ENCODE measurements at regions of chr6 and their contacts with region 1.

Region 1: GRCh38 chr6:90179190-90180169 is 117.2 kb downstream of the BACH2 start:
- DNase-seq: peak in 4 of 5 donors; percentile 27 to 36 (median 33)
- H3K4me3 ChIP-seq: no peak overlapping the region
- H3K4me3 Mint-ChIP-seq: no peak overlapping the region
- H3K27ac ChIP-seq: no peak overlapping the region
- H3K27ac Mint-ChIP-seq: peak overlapping the region in 3 of 7 donors; percentile 35 to 72 (median 62)
- H3K4me1 ChIP-seq: peaks cover 46% of the 10 kb centered on the region
- H3K4me1 Mint-ChIP-seq: peaks cover 28 to 75% (median 51%) of the 10 kb centered on the region in 4 donors
- H3K27me3 ChIP-seq: no peaks in the 10 kb centered on the region
- H3K27me3 Mint-ChIP-seq: no peaks in the 10 kb centered on the region

Region 2: GRCh38 chr6:89829591-89830385 is 349.7 kb before region 1 on chr6 and contains the start of gene CASP8AP2:
- CTCF ChIA-PET with region 1: no interaction called
- POLR2A ChIA-PET with region 1: no interaction called
- intact Hi-C with region 1: no loop called
- DNase-seq: peak; percentile 93 to 98 (median 98)
- H3K4me3 ChIP-seq: peak within 1 kb of the TSS; percentile 85 to 86
- H3K4me3 Mint-ChIP-seq: peak within 1 kb of the TSS; percentile 98 to 100 (median 99)
- H3K27ac ChIP-seq: peak within 1 kb of the TSS; percentile 74
- H3K27ac Mint-ChIP-seq: peak within 1 kb of the TSS; percentile 79 to 99 (median 97)
- H3K4me1 ChIP-seq: peaks cover 32% of the 10 kb centered on the region
- H3K4me1 Mint-ChIP-seq: peaks cover 17 to 52% (median 37%) of the 10 kb centered on the region in 4 donors
- H3K27me3 ChIP-seq: no peaks in the 10 kb centered on the region
- H3K27me3 Mint-ChIP-seq: no peaks in the 10 kb centered on the region
- total RNA-seq, gene CASP8AP2: 59.4 to 61.7 TPM

Region 3: GRCh38 chr6:89970609-89971337 is 208.7 kb before region 1 on chr6:
- CTCF ChIA-PET with region 1: interaction called, 4 read pairs
- POLR2A ChIA-PET with region 1: no interaction called
- intact Hi-C with region 1: loop called (anchors 2 kb)
- DNase-seq: peak in 4 of 5 donors; percentile 23 to 40 (median 33)
- H3K4me3 ChIP-seq: no peak overlapping the region
- H3K4me3 Mint-ChIP-seq: no peak overlapping the region
- H3K27ac ChIP-seq: no peak overlapping the region
- H3K27ac Mint-ChIP-seq: no peak overlapping the region
- H3K4me1 ChIP-seq: no peaks in the 10 kb centered on the region
- H3K4me1 Mint-ChIP-seq: peaks cover 2 to 20% (median 8%) of the 10 kb centered on the region in 4 donors
- H3K27me3 ChIP-seq: no peaks in the 10 kb centered on the region
- H3K27me3 Mint-ChIP-seq: no peaks in the 10 kb centered on the region

Region 4: DNA sequence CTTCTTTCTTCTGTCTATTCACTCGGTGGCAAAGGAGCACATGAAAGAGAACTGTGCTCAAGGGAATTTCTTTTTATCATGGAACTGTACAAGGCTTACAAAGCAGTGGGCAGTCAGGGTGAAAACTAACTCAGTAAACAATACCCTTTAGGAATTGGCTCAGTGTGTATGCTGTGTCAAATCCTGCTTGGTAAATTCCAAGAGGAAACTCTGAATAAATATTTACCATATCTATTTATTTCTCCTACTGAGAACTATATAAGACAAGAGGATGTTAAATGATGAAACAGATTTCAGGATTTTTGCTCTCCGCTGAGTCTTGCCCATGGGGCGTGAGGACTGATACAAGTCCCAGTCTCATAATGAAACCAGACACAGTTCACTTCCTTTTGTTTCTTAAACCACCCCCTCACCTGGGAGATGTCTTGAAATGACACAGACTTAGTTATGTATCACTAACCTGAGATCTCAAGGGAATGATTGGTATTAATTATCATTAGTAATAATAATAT is 71.7 kb before region 1 on chr6:
- CTCF ChIA-PET with region 1: no interaction called
- POLR2A ChIA-PET with region 1: no interaction called
- intact Hi-C with region 1: loop called (anchors 5 kb)
- DNase-seq: peak in 1 of 5 donors; percentile 21
- H3K4me3 ChIP-seq: no peak overlapping the region
- H3K4me3 Mint-ChIP-seq: peak overlapping the region in 5 of 8 donors; percentile 35 to 74 (median 60)
- H3K27ac ChIP-seq: no peak overlapping the region
- H3K27ac Mint-ChIP-seq: peak overlapping the region in 4 of 7 donors; percentile 15 to 67 (median 22)
- H3K4me1 ChIP-seq: peaks cover 78% of the 10 kb centered on the region
- H3K4me1 Mint-ChIP-seq: peaks cover 57 to 96% (median 73%) of the 10 kb centered on the region in 4 donors
- H3K27me3 ChIP-seq: no peaks in the 10 kb centered on the region
- H3K27me3 Mint-ChIP-seq: no peaks in the 10 kb centered on the region

Region 5: DNA sequence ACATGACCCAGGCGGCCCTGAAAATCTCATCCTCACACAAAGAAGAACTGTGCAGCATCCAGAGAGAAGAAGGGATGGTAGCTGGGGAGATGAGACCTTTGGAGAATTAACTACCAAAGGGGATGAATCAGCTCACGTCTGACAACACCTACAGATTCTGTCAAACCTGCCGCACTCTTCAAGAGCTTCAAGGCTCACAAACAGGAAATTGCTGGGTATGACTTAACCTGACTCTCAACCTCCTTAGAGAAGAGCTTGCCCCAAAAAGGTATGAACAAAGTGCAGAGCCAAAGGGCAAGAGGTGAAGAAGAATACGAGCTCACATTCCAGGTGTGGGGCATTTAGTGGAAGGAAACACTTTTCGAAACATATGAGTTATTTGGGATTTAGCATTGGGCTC is 22.6 kb before region 1 on chr6:
- CTCF ChIA-PET with region 1: interaction called, 10 read pairs
- POLR2A ChIA-PET with region 1: interaction called, 3 read pairs
- intact Hi-C with region 1: no loop called
- DNase-seq: peak; percentile 46 to 54 (median 49)
- H3K4me3 ChIP-seq: no peak overlapping the region
- H3K4me3 Mint-ChIP-seq: peak overlapping the region; percentile 3 to 73 (median 60)
- H3K27ac ChIP-seq: no peak overlapping the region
- H3K27ac Mint-ChIP-seq: peak overlapping the region; percentile 40 to 92 (median 84)
- H3K4me1 ChIP-seq: peaks cover 43% of the 10 kb centered on the region
- H3K4me1 Mint-ChIP-seq: peaks cover 22 to 64% (median 49%) of the 10 kb centered on the region in 4 donors
- H3K27me3 ChIP-seq: no peaks in the 10 kb centered on the region
- H3K27me3 Mint-ChIP-seq: no peaks in the 10 kb centered on the region

Region 6: DNA sequence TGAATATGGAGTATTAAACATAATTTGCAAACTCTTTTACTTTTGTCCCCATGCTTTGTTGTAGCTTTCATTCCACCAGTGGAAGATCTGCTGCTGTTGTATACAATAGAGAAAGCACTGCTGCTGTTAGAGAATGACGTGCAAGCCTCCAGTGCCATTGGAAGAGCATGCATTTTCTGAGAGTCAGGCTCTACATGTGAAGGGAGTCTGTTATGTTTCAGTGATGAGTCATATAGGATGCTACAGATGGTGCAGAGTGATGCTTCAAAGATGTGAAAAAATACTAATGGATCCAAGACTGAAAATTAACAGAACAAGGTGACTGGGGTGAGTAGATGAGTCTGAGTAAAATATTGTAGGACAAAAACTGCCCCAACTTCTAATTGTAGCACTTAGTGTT is 139.6 kb after region 1 on chr6:
- CTCF ChIA-PET with region 1: no interaction called
- POLR2A ChIA-PET with region 1: no interaction called
- intact Hi-C with region 1: no loop called
- DNase-seq: no peak
- H3K4me3 ChIP-seq: no peak overlapping the region
- H3K4me3 Mint-ChIP-seq: no peak overlapping the region
- H3K27ac ChIP-seq: no peak overlapping the region
- H3K27ac Mint-ChIP-seq: no peak overlapping the region
- H3K4me1 ChIP-seq: peaks cover 4% of the 10 kb centered on the region
- H3K4me1 Mint-ChIP-seq: peaks cover 0 to 8% (median 6%) of the 10 kb centered on the region in 4 donors
- H3K27me3 ChIP-seq: no peaks in the 10 kb centered on the region
- H3K27me3 Mint-ChIP-seq: peaks cover 3 to 10% of the 10 kb centered on the region in 2 donors